Colonic mucosa (tissue), 4 donors: ENCODE measurements at regions of chr1 and their contacts with region 1.

Region 1: GRCh38 chr1:176880954-176881595 is 283.4 kb downstream of the ASTN1 start:
- DNase-seq: peak; percentile 69
- H3K4me3 ChIP-seq: no peak overlapping the region
- H3K27ac ChIP-seq: no peak overlapping the region
- H3K4me1 ChIP-seq: no peaks in the 10 kb centered on the region
- H3K27me3 ChIP-seq: no peaks in the 10 kb centered on the region
- CTCF ChIP-seq: peak; percentile 79

Region 2: DNA sequence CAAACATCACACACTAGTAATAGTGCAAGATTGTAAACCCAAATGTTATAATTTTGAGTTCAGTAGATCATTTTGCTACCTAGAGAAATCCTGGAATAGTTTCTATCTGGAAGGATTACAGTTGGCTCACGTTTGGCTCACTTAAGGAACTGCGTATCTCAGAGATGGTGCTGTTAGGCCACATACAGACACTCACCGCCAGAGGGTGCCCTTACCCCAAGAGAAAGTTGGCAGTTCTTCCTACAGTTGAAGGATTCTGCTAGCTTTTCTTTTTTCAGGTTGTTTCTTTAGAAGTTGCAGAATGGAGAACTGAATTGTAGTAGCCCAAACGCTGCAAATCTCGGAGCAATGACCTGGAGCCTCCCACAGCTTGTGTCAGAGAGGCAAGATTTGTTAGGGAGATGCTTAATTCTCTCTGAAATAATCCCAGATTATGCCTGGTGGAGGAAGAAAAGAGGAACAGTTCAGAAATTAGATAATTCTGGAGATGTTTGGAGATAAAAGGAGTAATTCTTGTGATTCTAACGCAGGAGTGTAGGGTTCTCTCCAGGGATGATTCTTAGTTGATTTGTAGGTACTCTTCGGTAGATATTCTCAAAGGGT is 506.0 kb before region 1 on chr1:
- intact Hi-C with region 1: loop called (anchors 10 kb)
- DNase-seq: peak; percentile 73
- H3K4me3 ChIP-seq: no peak overlapping the region
- H3K27ac ChIP-seq: no peak overlapping the region
- H3K4me1 ChIP-seq: no peaks in the 10 kb centered on the region
- H3K27me3 ChIP-seq: no peaks in the 10 kb centered on the region
- CTCF ChIP-seq: peak; percentile 82

Region 3: DNA sequence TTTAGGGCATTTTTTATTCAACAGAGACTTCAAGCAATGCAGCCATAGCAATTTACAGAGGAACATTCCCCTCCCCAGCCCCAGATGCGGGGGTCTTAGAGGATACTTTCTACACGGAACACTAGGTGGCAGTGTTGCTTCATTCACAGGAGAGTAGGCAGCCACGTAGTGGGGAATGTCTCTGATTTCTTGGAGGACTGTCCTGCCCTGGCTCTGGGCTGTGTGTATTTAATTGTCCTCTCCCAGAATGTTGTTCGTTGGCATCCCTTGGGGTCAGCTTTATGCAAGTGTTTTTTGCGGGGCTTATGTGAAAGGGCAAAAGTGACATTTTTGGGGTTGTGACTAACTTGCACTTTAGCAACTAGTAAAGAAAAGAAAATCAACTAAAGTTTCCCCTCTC is 321.2 kb before region 1 on chr1:
- intact Hi-C with region 1: loop called (anchors 2 kb)
- DNase-seq: peak; percentile 42
- H3K4me3 ChIP-seq: no peak overlapping the region
- H3K27ac ChIP-seq: no peak overlapping the region
- H3K4me1 ChIP-seq: no peaks in the 10 kb centered on the region
- H3K27me3 ChIP-seq: no peaks in the 10 kb centered on the region
- CTCF ChIP-seq: peak; percentile 72